ENCODE measurements at regions of chr11 and their contacts with region 1.

Region 1: GRCh38 chr11:14789879-14790484 is 102.0 kb downstream of the CYP2R1 start:
- DNase-seq: no peak
- H3K4me3 ChIP-seq: no peak overlapping the region
- H3K27ac ChIP-seq: no peak overlapping the region
- H3K27me3 ChIP-seq: no peaks in the 10 kb centered on the region
- CTCF ChIP-seq: peak; percentile 24 to 90 (median 65)

Region 2: DNA sequence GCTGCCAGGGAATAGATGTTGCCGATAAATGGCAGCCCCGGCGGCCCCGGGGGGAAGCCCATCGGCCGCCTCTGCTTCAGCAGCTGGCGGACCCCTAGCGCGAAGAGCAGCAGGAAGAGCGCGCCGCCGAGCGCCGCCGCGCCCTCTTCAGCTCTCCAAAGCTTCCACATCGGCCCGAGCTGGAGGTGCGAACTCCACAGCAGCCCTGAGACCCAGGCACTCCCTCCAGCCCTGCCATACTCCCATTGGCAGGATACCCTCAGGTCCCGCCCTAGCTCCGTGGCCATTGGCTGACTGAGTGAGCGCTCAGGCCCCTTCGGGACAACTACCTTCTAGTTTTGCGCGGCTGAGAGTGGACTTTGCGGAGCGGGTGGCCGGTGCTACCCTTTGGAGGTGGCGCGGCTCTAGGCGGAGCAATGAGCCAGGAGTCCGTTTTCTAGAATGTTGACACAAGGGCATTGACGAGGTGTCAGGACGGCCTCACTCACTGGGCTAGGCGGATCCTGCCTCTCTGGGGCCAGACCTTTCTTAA is 102.1 kb after region 1 on chr11 and contains the start of gene CYP2R1:
- intact Hi-C with region 1: loop called in 1 of 2 experiments (anchors 5 kb)
- DNase-seq: peak; percentile 81 to 97 (median 94)
- H3K4me3 ChIP-seq: peak within 1 kb of the TSS; percentile 52 to 100 (median 83)
- H3K27ac ChIP-seq: peak within 1 kb of the TSS in 58 of 59 donors; percentile 58 to 94 (median 86)
- H3K27me3 ChIP-seq: no peaks in the 10 kb centered on the region
- CTCF ChIP-seq: peak in 13 of 56 donors; percentile 7 to 29 (median 16)
- total RNA-seq, gene CYP2R1: 7.2 to 17.8 (median 12.7) TPM

Region 3: DNA sequence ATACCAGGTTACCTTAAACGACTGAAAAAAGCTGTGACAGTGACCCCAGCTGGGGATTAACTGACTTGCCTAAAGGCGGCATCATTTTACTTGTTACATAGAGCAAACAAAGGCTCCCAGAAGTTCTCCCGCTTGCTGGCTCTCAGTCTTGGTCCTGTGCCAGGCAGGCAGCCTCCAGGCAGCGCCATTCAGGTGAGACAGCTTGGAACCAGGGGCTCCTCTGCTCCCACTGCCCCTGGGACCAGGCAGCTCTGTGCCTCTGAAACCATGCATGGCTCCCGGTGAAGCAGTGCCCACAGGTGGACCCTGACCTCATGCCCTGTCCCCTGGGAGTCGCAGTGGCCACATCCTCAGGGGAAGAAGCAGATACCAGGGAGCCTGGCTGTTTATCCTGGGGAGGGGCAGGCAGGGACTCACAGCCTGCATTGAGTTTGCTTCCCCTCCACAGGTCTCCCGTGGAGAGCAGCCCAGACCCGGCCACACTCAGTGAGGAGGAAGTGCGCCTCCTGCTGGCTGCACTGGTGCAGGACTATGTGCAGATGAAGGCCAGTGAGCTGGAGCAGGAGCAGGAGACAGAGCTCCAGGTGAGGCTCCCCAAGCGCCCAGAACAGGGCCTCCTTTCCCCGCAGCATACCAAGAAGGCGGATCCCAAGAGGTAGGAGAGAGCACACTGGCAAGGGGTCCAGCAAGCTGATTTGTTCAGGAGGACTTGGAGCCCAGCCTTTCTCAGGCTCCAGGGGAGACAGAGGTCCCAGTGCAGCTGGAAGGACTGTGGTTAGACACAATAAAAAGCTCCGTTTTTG is 117.6 kb after region 1 on chr11:
- intact Hi-C with region 1: loop called (anchors 1 to 5 kb)
- DNase-seq: peak; percentile 60 to 84 (median 80)
- H3K4me3 ChIP-seq: no peak overlapping the region
- H3K27ac ChIP-seq: no peak overlapping the region
- H3K27me3 ChIP-seq: peaks cover 0 to 5% (median 0%) of the 10 kb centered on the region in 45 donors
- CTCF ChIP-seq: peak; percentile 38 to 89 (median 80)

Region 4: GRCh38 chr11:15074206-15075161 is 284.5 kb after region 1 on chr11:
- intact Hi-C with region 1: loop called in 1 of 2 experiments (anchors 5 kb)
- DNase-seq: peak; percentile 67 to 88 (median 79)
- H3K4me3 ChIP-seq: peak overlapping the region; percentile 4 to 71 (median 50)
- H3K27ac ChIP-seq: no peak overlapping the region
- H3K27me3 ChIP-seq: peaks cover 0 to 34% (median 5%) of the 10 kb centered on the region in 45 donors
- CTCF ChIP-seq: peak; percentile 19 to 82 (median 70)

Region 5: DNA sequence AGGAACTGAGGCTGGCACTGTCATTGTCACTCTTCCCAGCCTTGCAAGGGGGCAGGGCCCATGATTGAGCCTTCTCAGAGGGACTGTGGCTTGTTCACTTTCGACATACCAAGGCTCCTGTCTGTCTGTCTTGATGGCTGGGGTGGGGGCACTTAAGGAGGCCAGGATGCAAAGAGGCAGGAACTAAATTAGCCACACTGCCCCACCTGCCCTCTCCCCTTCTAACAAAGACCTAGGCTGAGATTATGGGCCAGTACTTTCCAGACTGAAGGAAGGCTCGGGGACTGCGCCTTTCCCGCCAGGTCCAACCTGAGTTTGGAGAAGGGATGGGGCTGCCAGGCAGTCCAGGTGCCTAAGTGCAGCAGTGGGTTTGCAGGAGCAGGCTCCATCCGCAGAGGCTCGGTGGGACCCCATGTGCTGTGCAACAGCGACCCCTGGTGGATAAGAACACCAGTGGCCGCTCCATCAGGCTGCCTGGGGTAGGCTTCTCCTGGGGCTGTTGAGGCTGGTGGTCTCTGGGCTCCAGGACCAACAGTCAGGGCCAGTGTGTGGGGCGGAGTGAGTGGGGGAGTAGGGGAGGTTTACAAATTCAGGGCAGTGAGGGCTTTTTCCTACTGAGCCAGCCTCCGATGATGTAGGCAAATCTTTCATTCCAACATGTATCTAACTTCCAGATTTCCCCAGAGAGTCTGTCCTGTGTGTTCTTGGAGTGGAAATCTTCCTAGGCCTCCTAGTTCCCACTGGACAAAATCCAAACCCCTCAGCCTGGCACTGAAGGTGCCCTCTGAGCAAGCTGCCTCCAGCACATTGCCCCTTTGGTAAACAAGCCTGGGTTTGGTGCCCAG is 418.6 kb after region 1 on chr11:
- intact Hi-C with region 1: loop called in 1 of 2 experiments (anchors 2 kb)
- DNase-seq: peak; percentile 45 to 91 (median 78)
- H3K4me3 ChIP-seq: no peak overlapping the region
- H3K27ac ChIP-seq: no peak overlapping the region
- H3K27me3 ChIP-seq: peaks cover 0 to 21% (median 0%) of the 10 kb centered on the region in 45 donors
- CTCF ChIP-seq: peak; percentile 75 to 99 (median 96)